ENCODE measurements at regions of chr20 and their contacts with region 1.

Region 1: DNA sequence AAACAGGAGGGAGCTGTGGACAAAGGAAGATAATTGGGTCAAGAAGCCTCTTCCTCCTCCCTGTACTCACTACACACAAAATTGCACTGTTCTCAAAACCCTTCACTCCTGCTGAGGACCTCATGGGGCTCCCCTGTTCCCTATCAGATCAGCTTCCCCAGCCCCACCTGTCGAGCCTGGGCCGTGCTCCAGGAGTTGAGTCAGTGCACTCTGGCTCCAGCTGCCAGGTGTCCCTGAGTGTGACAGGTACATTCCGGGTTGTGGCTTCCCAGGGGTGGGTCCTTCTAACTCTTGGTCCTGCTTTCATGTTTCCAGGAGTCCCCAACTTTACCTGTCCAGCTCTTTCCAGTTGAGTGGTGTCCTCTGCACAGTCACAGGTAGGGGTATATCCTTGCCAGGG is 8.4 kb downstream of the RAB5IF start:
- DNase-seq: no peak
- H3K4me3 ChIP-seq: no peak overlapping the region
- H3K27ac ChIP-seq: no peak overlapping the region
- H3K4me1 ChIP-seq: no peaks in the 10 kb centered on the region
- H3K27me3 ChIP-seq: no peaks in the 10 kb centered on the region
- CTCF ChIP-seq: no peak
- POLR2A ChIP-seq: no peak

Region 2: GRCh38 chr20:36872852-36873251 is 258.9 kb after region 1 on chr20:
- intact Hi-C with region 1: loop called (anchors 10 kb)
- DNase-seq: no peak
- H3K4me3 ChIP-seq: no peak overlapping the region
- H3K27ac ChIP-seq: no peak overlapping the region
- H3K4me1 ChIP-seq: no peaks in the 10 kb centered on the region
- H3K27me3 ChIP-seq: no peaks in the 10 kb centered on the region
- CTCF ChIP-seq: no peak
- POLR2A ChIP-seq: no peak

Measured in uterus (tissue), 4 donors.